ENCODE measurements at regions of chrX and their contacts with region 1.

Region 1: GRCh38 chrX:132092439-132093065 is 35.3 kb downstream of the FRMD7 start:
- DNase-seq: peak; percentile 77
- H3K4me3 Mint-ChIP-seq: no peak overlapping the region
- H3K27ac Mint-ChIP-seq: no peak overlapping the region
- H3K4me1 Mint-ChIP-seq: no peaks in the 10 kb centered on the region
- H3K27me3 Mint-ChIP-seq: no peaks in the 10 kb centered on the region

Region 2: DNA sequence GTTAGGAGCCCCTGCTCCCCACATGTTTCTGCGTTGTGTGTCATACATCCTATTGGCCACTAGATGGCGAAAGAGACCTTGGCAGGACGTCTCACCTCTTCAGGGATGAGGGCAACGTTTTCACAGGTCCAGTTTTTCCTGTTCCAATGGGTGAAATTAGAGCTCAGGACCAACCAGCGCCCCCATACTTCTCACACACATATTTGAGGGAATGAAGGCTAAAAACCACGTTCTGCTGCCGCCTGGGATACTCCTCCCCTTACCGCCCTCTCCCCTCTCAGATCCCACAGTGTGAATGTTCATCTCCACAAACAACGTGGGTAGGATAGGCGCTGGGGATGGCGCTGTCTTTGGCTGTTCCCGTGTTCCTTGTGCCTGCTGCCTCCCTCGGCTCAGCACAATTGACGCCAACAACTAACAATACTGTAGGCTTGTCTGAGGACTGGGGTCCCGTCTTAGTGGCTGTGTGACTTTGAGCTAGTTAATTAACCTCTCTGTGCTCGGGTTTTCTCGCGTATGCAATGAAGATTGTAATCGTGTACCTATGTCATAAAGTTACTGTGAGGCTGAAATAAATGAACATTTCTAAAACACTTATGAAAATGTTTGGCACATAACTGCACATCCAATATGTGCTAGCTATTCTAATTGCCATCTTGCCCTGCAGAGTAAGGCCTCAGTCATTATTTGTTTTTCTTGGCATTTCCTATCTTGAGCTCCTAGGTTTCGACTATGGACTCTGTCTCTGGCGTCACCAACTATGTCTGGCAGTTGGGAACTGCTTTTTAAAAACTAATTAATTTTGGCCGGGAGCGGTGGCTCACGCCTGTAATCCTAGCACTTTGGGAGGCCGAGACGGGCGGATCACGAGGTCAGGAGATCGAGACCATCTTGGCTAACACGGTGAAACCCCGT is 250.8 kb before region 1 on chrX:
- CTCF ChIA-PET with region 1: interaction called, 3 read pairs
- intact Hi-C with region 1: loop called (anchors 5 kb)
- DNase-seq: peak; percentile 25
- H3K4me3 Mint-ChIP-seq: no peak overlapping the region
- H3K27ac Mint-ChIP-seq: no peak overlapping the region
- H3K4me1 Mint-ChIP-seq: peaks cover 4% of the 10 kb centered on the region
- H3K27me3 Mint-ChIP-seq: no peaks in the 10 kb centered on the region

Region 3: DNA sequence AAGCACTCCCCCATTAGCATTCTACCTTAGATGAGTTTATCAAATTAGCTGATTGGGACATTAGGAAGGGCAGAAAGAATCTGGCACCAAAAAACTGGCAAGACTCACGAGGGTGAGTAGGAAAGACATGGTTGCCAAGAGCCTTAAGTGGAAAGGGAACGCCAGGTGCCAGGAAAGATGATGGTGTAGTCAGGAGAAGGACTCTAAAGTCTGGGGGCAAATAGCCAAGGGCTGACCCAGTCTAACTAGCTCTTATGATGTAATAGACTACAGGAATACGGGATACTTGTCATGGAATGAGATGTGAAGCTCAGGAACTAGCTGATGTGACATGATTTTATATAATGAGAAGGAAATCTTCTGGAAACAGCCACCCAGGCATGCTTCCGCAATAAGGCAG is 301.4 kb after region 1 on chrX:
- CTCF ChIA-PET with region 1: no interaction called
- intact Hi-C with region 1: no loop called
- DNase-seq: no peak
- H3K4me3 Mint-ChIP-seq: no peak overlapping the region
- H3K27ac Mint-ChIP-seq: no peak overlapping the region
- H3K4me1 Mint-ChIP-seq: peaks cover 7% of the 10 kb centered on the region
- H3K27me3 Mint-ChIP-seq: no peaks in the 10 kb centered on the region

Measured in activated naive CD4-positive, alpha-beta T cell treated with anti-CD3 and anti-CD28 coated beads for 36 hours (primary cell).